ENCODE measurements at regions of chr6 and their contacts with region 1.

Region 1: GRCh38 chr6:75266716-75267291 is 17.8 kb downstream of the TMEM30A start:
- DNase-seq: peak in 4 of 5 donors; percentile 41 to 43 (median 41)
- H3K4me3 ChIP-seq: no peak overlapping the region
- H3K4me3 Mint-ChIP-seq: no peak overlapping the region
- H3K27ac ChIP-seq: no peak overlapping the region
- H3K27ac Mint-ChIP-seq: no peak overlapping the region
- H3K4me1 ChIP-seq: peaks cover 15% of the 10 kb centered on the region
- H3K4me1 Mint-ChIP-seq: peaks cover 29 to 48% (median 39%) of the 10 kb centered on the region in 4 donors
- H3K27me3 ChIP-seq: no peaks in the 10 kb centered on the region
- H3K27me3 Mint-ChIP-seq: no peaks in the 10 kb centered on the region

Region 2: GRCh38 chr6:74606581-74607071 is 660.2 kb before region 1 on chr6:
- CTCF ChIA-PET with region 1: no interaction called
- POLR2A ChIA-PET with region 1: no interaction called
- intact Hi-C with region 1: no loop called
- DNase-seq: no peak
- H3K4me3 ChIP-seq: no peak overlapping the region
- H3K4me3 Mint-ChIP-seq: no peak overlapping the region
- H3K27ac ChIP-seq: no peak overlapping the region
- H3K27ac Mint-ChIP-seq: no peak overlapping the region
- H3K4me1 ChIP-seq: no peaks in the 10 kb centered on the region
- H3K4me1 Mint-ChIP-seq: no peaks in the 10 kb centered on the region
- H3K27me3 ChIP-seq: no peaks in the 10 kb centered on the region
- H3K27me3 Mint-ChIP-seq: no peaks in the 10 kb centered on the region

Region 3: DNA sequence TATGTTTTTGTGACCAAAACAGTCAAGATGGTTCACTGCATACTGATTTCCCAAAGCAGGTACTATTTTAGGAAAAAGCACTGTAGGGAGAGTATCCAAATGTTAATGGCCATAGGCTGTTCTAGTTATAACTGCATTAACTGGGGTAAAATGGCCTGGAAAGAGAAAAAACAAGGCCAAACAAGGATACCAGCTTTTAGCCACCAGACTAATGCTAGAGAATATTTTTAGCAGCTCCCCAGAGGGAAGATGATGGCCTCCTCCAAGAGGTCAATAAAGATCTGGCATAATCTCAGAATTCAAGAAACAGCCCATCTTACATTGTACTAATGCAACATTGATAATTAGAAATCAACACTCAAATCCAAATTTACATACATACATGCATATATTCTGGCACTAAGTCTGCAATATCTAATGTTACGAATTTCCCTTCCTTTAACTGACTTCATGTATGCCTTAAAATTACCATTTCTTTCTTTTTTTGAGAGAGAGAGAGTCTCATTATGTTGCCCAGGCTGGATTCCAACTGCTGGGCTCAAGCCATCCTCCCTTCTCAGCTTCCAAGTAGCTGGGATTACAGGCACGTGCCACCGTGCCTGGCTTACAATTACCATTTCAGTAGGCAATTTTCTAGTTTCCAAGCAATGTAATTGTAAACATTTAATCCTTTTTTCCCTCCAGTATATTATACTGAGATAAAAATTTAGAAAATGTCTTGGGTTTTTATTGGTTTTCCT is 32.5 kb before region 1 on chr6:
- CTCF ChIA-PET with region 1: no interaction called
- POLR2A ChIA-PET with region 1: no interaction called
- intact Hi-C with region 1: no loop called
- DNase-seq: no peak
- H3K4me3 ChIP-seq: no peak overlapping the region
- H3K4me3 Mint-ChIP-seq: no peak overlapping the region
- H3K27ac ChIP-seq: no peak overlapping the region
- H3K27ac Mint-ChIP-seq: peak overlapping the region in 2 of 7 donors; percentile 13 to 25
- H3K4me1 ChIP-seq: no peaks in the 10 kb centered on the region
- H3K4me1 Mint-ChIP-seq: peaks cover 0 to 2% (median under 1%) of the 10 kb centered on the region in 4 donors
- H3K27me3 ChIP-seq: no peaks in the 10 kb centered on the region
- H3K27me3 Mint-ChIP-seq: no peaks in the 10 kb centered on the region

Region 4: DNA sequence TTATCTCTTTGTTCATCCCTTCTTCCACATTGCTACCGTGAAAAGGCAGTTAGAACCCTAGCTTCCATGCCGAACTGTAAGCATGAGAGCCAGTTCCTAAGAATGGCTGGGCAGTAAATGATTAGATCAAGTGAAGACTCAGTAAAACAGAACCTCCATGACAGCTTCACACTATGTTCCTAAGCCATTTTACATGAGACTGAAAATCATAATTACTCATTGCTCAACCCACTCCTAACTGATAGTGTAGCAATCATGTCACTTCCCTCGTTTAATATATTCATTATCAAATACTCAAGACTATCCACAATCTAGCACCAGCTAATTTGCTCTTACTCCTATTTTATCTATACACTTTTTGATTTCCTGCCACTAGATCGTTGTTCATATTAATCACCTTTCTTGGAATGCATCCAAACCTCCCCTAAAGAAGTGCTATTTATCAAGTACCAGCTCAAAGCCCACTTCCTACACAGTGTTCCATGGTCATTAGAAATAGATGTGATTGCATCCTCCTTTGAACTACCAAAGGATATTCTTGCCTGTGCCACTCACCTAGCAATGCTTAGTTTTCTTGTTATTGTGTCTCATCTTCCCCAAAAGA is 11.8 kb after region 1 on chr6:
- CTCF ChIA-PET with region 1: interaction called, 20 read pairs
- POLR2A ChIA-PET with region 1: no interaction called
- intact Hi-C with region 1: no loop called
- DNase-seq: no peak
- H3K4me3 ChIP-seq: no peak overlapping the region
- H3K4me3 Mint-ChIP-seq: peak overlapping the region in 4 of 8 donors; percentile 4 to 9 (median 7)
- H3K27ac ChIP-seq: no peak overlapping the region
- H3K27ac Mint-ChIP-seq: peak overlapping the region; percentile 0 to 66 (median 6)
- H3K4me1 ChIP-seq: peaks cover 79% of the 10 kb centered on the region
- H3K4me1 Mint-ChIP-seq: peaks cover 59 to 72% (median 66%) of the 10 kb centered on the region in 4 donors
- H3K27me3 ChIP-seq: no peaks in the 10 kb centered on the region
- H3K27me3 Mint-ChIP-seq: no peaks in the 10 kb centered on the region

Region 5: DNA sequence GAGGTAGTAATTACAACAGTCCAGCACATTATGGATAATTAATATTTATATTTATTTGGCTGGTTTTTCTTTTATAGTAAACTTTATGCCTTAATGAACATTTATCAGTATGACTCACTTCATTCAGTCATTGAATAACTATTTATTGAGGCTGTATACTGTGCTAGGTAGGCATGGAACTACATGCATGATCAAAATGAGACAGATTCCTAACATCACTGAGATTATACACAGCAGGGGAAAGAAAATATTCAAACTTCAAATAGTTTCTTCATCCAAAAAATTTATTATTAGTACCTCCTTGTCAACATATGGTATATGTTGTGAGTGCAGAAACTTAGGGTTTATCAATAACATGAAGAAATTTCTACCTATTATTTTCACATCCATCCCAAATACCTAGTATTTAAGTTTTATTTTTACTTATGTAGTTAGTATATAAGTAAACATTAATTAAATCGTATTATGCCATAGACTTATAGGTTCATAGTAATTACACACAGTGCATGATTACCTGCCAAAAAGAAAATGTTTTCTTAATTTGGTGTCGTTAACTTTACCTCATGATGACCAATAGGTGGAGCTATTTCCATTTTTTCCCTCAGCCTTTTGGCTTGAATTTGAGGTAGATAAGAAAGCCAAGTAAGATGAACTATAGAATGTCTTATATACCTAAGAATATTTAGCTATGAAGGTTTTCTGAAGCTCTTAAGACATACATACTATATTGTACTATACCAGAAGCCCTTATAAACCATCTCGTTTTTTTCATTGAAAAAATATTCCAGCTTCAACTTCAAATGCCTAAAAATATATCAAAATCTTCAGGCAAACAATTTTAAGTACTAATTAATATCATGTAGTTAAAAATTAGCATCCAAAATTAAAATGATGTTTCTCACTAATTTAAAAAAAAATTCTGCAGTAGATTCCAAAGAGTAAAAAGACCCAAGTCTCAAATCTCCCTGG is 30.3 kb after region 1 on chr6:
- CTCF ChIA-PET with region 1: interaction called, 8 read pairs
- POLR2A ChIA-PET with region 1: no interaction called
- intact Hi-C with region 1: loop called (anchors 1 kb)
- DNase-seq: peak in 4 of 5 donors; percentile 46 to 58 (median 52)
- H3K4me3 ChIP-seq: no peak overlapping the region
- H3K4me3 Mint-ChIP-seq: no peak overlapping the region
- H3K27ac ChIP-seq: no peak overlapping the region
- H3K27ac Mint-ChIP-seq: no peak overlapping the region
- H3K4me1 ChIP-seq: no peaks in the 10 kb centered on the region
- H3K4me1 Mint-ChIP-seq: no peaks in the 10 kb centered on the region
- H3K27me3 ChIP-seq: no peaks in the 10 kb centered on the region
- H3K27me3 Mint-ChIP-seq: no peaks in the 10 kb centered on the region

Region 6: GRCh38 chr6:75526502-75527127 is 259.8 kb after region 1 on chr6:
- CTCF ChIA-PET with region 1: interaction called, 22 read pairs
- POLR2A ChIA-PET with region 1: no interaction called
- intact Hi-C with region 1: loop called (anchors 1 kb)
- DNase-seq: peak; percentile 58 to 63 (median 58)
- H3K4me3 ChIP-seq: no peak overlapping the region
- H3K4me3 Mint-ChIP-seq: no peak overlapping the region
- H3K27ac ChIP-seq: no peak overlapping the region
- H3K27ac Mint-ChIP-seq: no peak overlapping the region
- H3K4me1 ChIP-seq: no peaks in the 10 kb centered on the region
- H3K4me1 Mint-ChIP-seq: no peaks in the 10 kb centered on the region
- H3K27me3 ChIP-seq: no peaks in the 10 kb centered on the region
- H3K27me3 Mint-ChIP-seq: peaks cover 18 to 19% of the 10 kb centered on the region in 2 donors

Measured in CD4-positive, alpha-beta memory T cell (primary cell).